Naive thymus-derived CD4-positive, alpha-beta T cell (primary cell): ENCODE measurements at regions of chr6 and their contacts with region 1.

Region 1: DNA sequence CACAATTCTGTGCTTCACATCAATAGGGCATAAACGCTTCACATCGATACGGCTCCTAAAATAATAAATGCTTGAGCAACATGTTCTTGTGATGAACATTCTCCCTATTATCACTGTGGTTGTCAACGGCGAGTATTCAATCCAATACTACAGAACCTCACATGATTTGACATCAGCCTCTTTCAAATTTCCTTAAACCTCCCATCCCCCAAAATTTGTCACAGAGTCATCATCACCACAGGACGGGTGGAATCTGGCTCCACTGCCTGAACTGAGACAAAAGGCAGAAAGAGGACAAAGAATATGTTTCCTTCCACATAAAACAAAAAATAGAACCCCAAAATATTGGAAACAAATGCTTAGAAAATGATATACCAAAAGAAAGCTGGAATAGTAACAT is 7.3 kb downstream of the THEMIS start:
- DNase-seq: peak in 1 of 9 donors; percentile 35
- ATAC-seq: no peak
- H3K4me3 ChIP-seq: peak overlapping the region; percentile 41
- H3K4me3 Mint-ChIP-seq: peak overlapping the region; percentile 60 to 91 (median 82)
- H3K27ac ChIP-seq: peak overlapping the region; percentile 70
- H3K27ac Mint-ChIP-seq: peak overlapping the region; percentile 58 to 100 (median 90)
- H3K4me1 ChIP-seq: peaks cover 18 to 29% of the 10 kb centered on the region in 2 donors
- H3K4me1 Mint-ChIP-seq: peaks cover 34 to 74% (median 66%) of the 10 kb centered on the region in 7 donors
- H3K27me3 ChIP-seq: no peaks in the 10 kb centered on the region
- H3K27me3 Mint-ChIP-seq: no peaks in the 10 kb centered on the region

Region 2: GRCh38 chr6:127342946-127343808 is 550.4 kb before region 1 on chr6 and contains the start of gene ECHDC1:
- CTCF ChIA-PET with region 1: no interaction called
- POLR2A ChIA-PET with region 1: no interaction called
- intact Hi-C with region 1: loop called in 1 of 2 experiments (anchors 10 kb)
- DNase-seq: peak; percentile 45 to 76 (median 70)
- ATAC-seq: peak; percentile 87
- H3K4me3 ChIP-seq: peak within 1 kb of the TSS; percentile 83
- H3K4me3 Mint-ChIP-seq: no peak within 1 kb of the TSS
- H3K27ac ChIP-seq: peak within 1 kb of the TSS; percentile 91
- H3K27ac Mint-ChIP-seq: no peak within 1 kb of the TSS
- H3K4me1 ChIP-seq: peaks cover 34 to 39% of the 10 kb centered on the region in 2 donors
- H3K4me1 Mint-ChIP-seq: peaks cover 0 to 12% (median 9%) of the 10 kb centered on the region in 7 donors
- H3K27me3 ChIP-seq: no peaks in the 10 kb centered on the region
- H3K27me3 Mint-ChIP-seq: no peaks in the 10 kb centered on the region
- total RNA-seq, gene ECHDC1: 18.1 to 46.5 (median 34.3) TPM

Region 3: GRCh38 chr6:127879685-127880084 is 13.9 kb before region 1 on chr6:
- CTCF ChIA-PET with region 1: no interaction called
- POLR2A ChIA-PET with region 1: interaction called, 6 read pairs
- intact Hi-C with region 1: loop called in 1 of 2 experiments (anchors 1 kb)
- DNase-seq: no peak
- ATAC-seq: no peak
- H3K4me3 ChIP-seq: no peak overlapping the region
- H3K4me3 Mint-ChIP-seq: peak overlapping the region; percentile 43 to 85 (median 73)
- H3K27ac ChIP-seq: no peak overlapping the region
- H3K27ac Mint-ChIP-seq: peak overlapping the region; percentile 6 to 90 (median 74)
- H3K4me1 ChIP-seq: peaks cover 54 to 58% of the 10 kb centered on the region in 2 donors
- H3K4me1 Mint-ChIP-seq: peaks cover 28 to 89% (median 75%) of the 10 kb centered on the region in 7 donors
- H3K27me3 ChIP-seq: no peaks in the 10 kb centered on the region
- H3K27me3 Mint-ChIP-seq: no peaks in the 10 kb centered on the region

Region 4: GRCh38 chr6:127938701-127939100 is 45.2 kb after region 1 on chr6:
- CTCF ChIA-PET with region 1: no interaction called
- POLR2A ChIA-PET with region 1: interaction called, 6 read pairs
- intact Hi-C with region 1: loop called in 1 of 2 experiments (anchors 1 kb)
- DNase-seq: no peak
- ATAC-seq: no peak
- H3K4me3 ChIP-seq: no peak overlapping the region
- H3K4me3 Mint-ChIP-seq: peak overlapping the region in 2 of 10 donors; percentile 14 to 39
- H3K27ac ChIP-seq: no peak overlapping the region
- H3K27ac Mint-ChIP-seq: peak overlapping the region in 5 of 9 donors; percentile 28 to 97 (median 57)
- H3K4me1 ChIP-seq: peaks cover 25 to 40% of the 10 kb centered on the region in 2 donors
- H3K4me1 Mint-ChIP-seq: peaks cover 21 to 81% (median 63%) of the 10 kb centered on the region in 7 donors
- H3K27me3 ChIP-seq: no peaks in the 10 kb centered on the region
- H3K27me3 Mint-ChIP-seq: no peaks in the 10 kb centered on the region